ENCODE measurements at regions of chr6 and their contacts with region 1.

Region 1: GRCh38 chr6:28136585-28137504 is 4.8 kb upstream of the ZKSCAN8 start:
- DNase-seq: peak; percentile 85
- H3K4me3 Mint-ChIP-seq: peak overlapping the region; percentile 82
- H3K27ac Mint-ChIP-seq: peak overlapping the region; percentile 92
- H3K4me1 Mint-ChIP-seq: peaks cover 65% of the 10 kb centered on the region
- H3K27me3 Mint-ChIP-seq: no peaks in the 10 kb centered on the region

Region 2: GRCh38 chr6:27791182-27791943 is 345.5 kb before region 1 on chr6:
- CTCF ChIA-PET with region 1: no interaction called
- POLR2A ChIA-PET with region 1: no interaction called
- intact Hi-C with region 1: no loop called
- DNase-seq: peak; percentile 57
- H3K4me3 Mint-ChIP-seq: peak overlapping the region; percentile 76
- H3K27ac Mint-ChIP-seq: no peak overlapping the region
- H3K4me1 Mint-ChIP-seq: peaks cover 22% of the 10 kb centered on the region
- H3K27me3 Mint-ChIP-seq: peaks cover 12% of the 10 kb centered on the region

Region 3: DNA sequence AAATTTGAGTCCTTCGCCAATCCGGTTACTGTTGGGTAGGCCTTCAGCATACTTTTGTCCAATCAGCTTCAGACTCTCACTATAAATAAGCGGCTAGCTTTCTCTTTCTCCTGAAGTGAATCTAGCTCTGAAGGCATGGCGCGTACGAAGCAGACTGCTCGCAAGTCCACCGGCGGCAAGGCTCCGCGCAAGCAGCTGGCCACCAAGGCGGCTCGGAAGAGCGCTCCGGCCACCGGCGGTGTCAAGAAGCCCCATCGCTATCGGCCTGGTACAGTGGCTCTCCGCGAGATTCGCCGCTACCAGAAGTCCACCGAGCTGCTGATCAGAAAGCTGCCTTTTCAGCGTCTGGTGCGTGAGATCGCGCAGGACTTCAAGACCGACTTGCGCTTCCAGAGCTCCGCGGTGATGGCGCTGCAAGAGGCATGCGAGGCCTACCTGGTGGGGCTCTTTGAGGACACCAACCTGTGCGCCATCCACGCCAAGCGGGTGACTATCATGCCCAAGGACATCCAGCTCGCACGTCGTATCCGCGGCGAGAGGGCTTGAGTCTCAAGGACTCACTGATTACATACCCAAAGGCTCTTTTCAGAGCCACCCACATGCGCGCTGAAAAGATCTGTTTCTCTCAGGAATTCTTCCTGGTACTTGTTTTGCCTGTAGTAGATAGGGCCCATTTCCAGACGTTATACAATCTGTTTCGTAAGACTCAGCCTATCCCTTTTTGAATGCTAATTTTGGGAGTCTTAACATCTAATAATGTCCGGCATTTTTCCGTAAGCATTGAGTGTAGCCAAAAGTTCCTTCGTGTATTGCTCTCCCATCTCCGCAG is 326.7 kb before region 1 on chr6:
- CTCF ChIA-PET with region 1: no interaction called
- POLR2A ChIA-PET with region 1: interaction called, 3 read pairs
- intact Hi-C with region 1: loop called (anchors 5 kb)
- DNase-seq: peak; percentile 82
- H3K4me3 Mint-ChIP-seq: peak overlapping the region; percentile 85
- H3K27ac Mint-ChIP-seq: peak overlapping the region; percentile 96
- H3K4me1 Mint-ChIP-seq: peaks cover 61% of the 10 kb centered on the region
- H3K27me3 Mint-ChIP-seq: peaks cover 4% of the 10 kb centered on the region

Region 4: DNA sequence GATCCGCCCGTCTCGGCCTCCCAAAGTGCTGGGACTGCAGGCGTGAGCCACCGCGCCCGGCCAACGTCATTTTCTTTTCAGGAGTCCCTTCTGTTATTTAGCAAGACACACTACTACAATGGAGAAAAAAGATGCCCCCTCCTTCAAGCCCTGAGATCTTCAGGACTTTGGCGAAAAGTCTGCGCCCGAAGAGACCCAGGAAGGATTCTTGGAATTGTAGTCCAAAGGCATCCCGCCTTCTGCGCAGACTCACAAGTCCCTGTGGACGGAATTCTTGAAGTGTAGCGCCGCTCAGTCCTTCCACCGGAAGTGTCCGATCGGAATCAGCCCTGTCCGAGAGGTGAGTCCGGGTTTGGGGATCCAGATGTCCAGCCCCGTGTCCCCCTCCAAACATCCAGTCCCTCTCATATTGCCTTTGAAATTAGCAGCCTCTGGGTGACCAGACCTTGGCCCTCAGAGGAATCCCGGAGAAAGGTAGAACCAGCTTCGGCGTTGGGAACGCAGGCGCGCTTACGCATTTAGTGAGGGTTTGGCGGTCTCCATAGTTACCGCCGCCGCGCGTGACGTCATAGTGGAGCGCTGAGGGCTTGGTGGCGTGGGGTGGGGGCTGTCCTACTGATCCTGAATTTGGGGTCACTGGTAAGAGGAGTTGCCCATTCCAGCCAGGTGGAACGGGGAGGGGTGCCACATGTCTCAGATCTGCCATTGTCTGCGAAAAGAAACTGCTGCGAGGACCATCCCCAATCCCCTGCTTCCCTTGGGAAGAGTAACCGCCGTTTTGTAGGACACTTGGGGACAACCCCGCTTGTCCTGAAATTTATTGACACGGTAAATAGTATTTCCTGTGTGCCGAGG is 56.0 kb before region 1 on chr6:
- CTCF ChIA-PET with region 1: no interaction called
- POLR2A ChIA-PET with region 1: no interaction called
- intact Hi-C with region 1: loop called (anchors 1 kb)
- DNase-seq: peak; percentile 92
- H3K4me3 Mint-ChIP-seq: peak overlapping the region; percentile 96
- H3K27ac Mint-ChIP-seq: peak overlapping the region; percentile 97
- H3K4me1 Mint-ChIP-seq: peaks cover 20% of the 10 kb centered on the region
- H3K27me3 Mint-ChIP-seq: no peaks in the 10 kb centered on the region

Region 5: DNA sequence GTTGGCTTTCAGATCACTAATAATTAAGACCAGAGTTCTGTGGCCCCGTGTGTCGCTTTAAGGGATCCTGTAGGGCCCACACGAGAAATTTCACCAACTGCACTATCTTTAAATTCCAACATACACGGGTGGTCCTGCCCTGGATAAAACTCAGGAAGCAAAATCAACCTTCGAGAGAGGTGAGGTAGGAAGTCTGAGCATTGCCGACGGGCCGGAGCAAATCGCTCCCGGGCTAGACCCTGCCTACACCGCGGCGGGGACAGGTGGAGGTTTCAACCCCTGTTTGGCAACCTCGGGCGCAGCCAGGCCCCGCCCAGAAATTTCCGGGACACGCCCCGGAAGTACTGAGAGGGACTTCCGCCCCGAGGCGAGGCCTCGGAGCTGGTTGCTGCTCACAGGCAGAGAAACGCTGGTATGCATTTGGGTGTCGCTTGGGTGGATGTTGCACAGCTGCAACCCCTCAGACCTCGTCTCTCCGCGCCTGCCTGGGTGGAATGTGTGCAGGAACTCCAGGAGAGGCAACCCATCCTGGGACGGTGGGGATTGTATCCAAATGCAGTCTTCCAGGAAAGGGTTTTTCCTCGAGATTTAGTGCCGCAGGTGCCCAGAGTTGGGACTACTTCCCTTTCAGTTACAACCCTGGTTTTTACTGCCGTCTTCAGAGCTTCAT is 24.7 kb after region 1 on chr6:
- CTCF ChIA-PET with region 1: no interaction called
- POLR2A ChIA-PET with region 1: no interaction called
- intact Hi-C with region 1: no loop called
- DNase-seq: peak; percentile 89
- H3K4me3 Mint-ChIP-seq: peak overlapping the region; percentile 61
- H3K27ac Mint-ChIP-seq: peak overlapping the region; percentile 42
- H3K4me1 Mint-ChIP-seq: peaks cover 14% of the 10 kb centered on the region
- H3K27me3 Mint-ChIP-seq: no peaks in the 10 kb centered on the region

Region 6: DNA sequence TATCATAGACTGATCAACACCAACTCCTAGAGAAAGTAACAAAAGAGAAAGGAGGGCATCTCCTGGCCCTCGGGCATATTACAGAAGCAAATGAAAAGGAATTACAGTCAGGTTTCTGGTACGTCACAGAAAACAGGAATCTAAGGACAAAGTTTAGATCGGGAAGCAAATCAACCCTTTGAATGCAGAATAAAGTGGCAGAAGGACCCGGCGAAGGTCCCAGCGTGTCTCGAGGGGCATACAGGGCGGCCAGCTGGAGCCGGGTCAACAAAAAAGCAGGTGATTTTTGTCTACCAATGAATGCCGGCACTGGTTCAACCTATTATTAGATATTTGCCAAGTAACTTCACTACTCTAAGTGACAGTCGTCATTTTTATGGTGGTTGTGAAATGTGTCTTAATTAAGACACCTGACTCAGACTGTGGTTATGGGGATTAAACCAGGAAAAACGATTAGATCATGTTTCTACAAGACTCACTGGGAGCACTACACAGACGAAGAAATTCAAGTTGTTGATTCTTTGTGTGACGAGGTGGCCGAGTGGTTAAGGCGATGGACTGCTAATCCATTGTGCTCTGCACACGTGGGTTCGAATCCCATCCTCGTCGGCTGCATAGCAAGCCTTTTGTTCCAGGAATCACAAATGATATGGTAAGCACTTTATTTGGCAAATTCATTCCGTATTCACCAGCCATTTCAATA is 75.8 kb after region 1 on chr6:
- CTCF ChIA-PET with region 1: interaction called, 3 read pairs
- POLR2A ChIA-PET with region 1: no interaction called
- intact Hi-C with region 1: loop called (anchors 2 kb)
- DNase-seq: peak; percentile 80
- H3K4me3 Mint-ChIP-seq: peak overlapping the region; percentile 75
- H3K27ac Mint-ChIP-seq: peak overlapping the region; percentile 59
- H3K4me1 Mint-ChIP-seq: peaks cover 19% of the 10 kb centered on the region
- H3K27me3 Mint-ChIP-seq: peaks cover 67% of the 10 kb centered on the region

Region 7: GRCh38 chr6:28281288-28282064 is 144.6 kb after region 1 on chr6 and contains the start of gene PGBD1:
- CTCF ChIA-PET with region 1: no interaction called
- POLR2A ChIA-PET with region 1: no interaction called
- intact Hi-C with region 1: no loop called
- DNase-seq: peak; percentile 68
- H3K4me3 Mint-ChIP-seq: peak within 1 kb of the TSS; percentile 76
- H3K27ac Mint-ChIP-seq: no peak within 1 kb of the TSS
- H3K4me1 Mint-ChIP-seq: peaks cover 11% of the 10 kb centered on the region
- H3K27me3 Mint-ChIP-seq: peaks cover 15% of the 10 kb centered on the region
- total RNA-seq, gene PGBD1: 1.6 to 1.9 TPM

Region 8: DNA sequence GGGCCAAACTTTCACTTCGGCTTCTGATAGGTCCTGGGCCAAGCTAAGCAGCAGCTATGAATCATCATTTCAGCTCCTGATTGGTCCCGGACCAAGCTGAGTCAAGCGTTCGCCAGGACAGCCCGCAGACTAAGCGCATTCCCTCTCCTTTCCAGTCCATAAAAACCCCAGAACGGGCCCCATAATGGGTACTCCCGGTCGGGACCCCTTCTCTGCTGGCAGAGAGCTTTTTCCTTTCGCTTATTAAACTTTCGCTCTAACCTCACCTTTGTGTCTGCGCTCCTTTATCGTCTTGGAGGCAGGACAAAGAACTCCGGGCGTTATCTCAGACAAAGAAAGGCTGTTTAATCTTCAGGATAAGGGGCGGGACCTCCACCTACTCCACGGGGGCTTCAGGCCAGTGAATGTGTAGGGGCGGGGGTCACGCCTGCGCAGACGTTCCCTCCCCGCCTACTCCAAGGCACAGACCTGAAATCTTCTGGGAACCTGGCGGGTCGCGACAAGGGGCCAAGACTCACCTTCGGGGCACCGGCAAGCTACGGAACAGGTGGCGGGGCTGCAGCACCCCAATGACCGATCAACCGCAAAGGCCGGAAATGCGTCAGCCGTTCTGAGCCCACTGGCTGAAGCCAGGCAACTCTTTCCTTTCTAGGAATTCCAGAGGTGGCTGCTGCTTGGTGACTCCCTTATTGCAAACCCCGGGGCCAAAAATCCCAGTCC is 198.9 kb after region 1 on chr6 and contains the start of gene ZSCAN31:
- CTCF ChIA-PET with region 1: no interaction called
- POLR2A ChIA-PET with region 1: interaction called, 4 read pairs
- intact Hi-C with region 1: loop called (anchors 5 kb)
- DNase-seq: peak; percentile 88
- H3K4me3 Mint-ChIP-seq: no peak within 1 kb of the TSS
- H3K27ac Mint-ChIP-seq: no peak within 1 kb of the TSS
- H3K4me1 Mint-ChIP-seq: no peaks in the 10 kb centered on the region
- H3K27me3 Mint-ChIP-seq: no peaks in the 10 kb centered on the region
- total RNA-seq, gene ZSCAN31: 0.77 to 1.6 TPM

Region 9: GRCh38 chr6:28399350-28400121 is 262.7 kb after region 1 on chr6 and contains the start of gene ZSCAN12:
- CTCF ChIA-PET with region 1: no interaction called
- POLR2A ChIA-PET with region 1: no interaction called
- intact Hi-C with region 1: loop called (anchors 1 kb)
- DNase-seq: peak; percentile 90
- H3K4me3 Mint-ChIP-seq: peak within 1 kb of the TSS; percentile 85
- H3K27ac Mint-ChIP-seq: peak within 1 kb of the TSS; percentile 84
- H3K4me1 Mint-ChIP-seq: peaks cover 30% of the 10 kb centered on the region
- H3K27me3 Mint-ChIP-seq: peaks cover 24% of the 10 kb centered on the region
- total RNA-seq, gene ZSCAN12: 4.1 to 4.4 TPM